ENCODE measurements at regions of chr12 and their contacts with region 1.

Region 1: DNA sequence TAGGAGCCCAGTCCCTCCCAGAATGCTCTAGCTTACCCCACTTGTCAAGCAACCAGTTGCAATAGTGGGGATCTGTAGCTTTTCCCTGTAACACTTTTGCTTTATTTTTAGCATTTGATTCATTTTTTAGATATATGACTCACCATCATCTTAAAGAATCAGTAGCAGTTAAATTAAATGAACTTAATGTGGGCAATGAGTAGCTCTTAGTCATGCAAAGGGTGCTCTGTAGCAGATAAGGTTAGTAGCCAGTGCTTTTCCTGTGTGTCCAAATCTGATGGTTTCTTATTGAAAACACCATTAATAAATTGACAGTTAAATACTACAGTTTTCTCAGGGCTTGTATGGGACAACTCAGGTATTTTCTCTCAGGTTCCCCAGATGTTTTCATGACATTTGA is 311.8 kb downstream of the RERGL start:
- DNase-seq: no peak
- H3K4me3 ChIP-seq: no peak overlapping the region
- H3K27ac ChIP-seq: no peak overlapping the region
- H3K4me1 ChIP-seq: no peaks in the 10 kb centered on the region
- H3K27me3 ChIP-seq: no peaks in the 10 kb centered on the region
- CTCF ChIP-seq: no peak
- EP300 ChIP-seq: no peak
- POLR2A ChIP-seq: no peak

Region 2: DNA sequence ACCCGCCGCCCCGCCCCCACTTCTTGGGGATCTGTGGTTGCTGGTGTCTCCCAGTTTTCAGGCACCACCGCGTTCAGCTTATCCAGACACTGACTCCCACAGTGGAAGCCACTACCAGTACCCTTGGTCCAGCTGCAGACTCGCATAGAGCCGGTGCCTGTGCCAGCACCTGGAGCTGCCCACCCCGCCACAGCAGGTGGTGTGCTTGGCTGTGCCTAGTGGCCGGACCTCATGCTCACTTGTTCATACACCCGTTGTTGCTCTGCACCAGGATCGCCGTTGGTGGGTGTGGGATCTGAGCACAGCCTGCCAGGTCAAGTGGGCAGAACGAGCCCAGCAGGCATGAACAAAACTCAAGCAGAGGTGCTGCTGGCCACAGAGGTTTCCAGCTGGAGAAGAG is 361.5 kb before region 1 on chr12:
- intact Hi-C with region 1: no loop called
- DNase-seq: no peak
- H3K4me3 ChIP-seq: no peak overlapping the region
- H3K27ac ChIP-seq: no peak overlapping the region
- H3K4me1 ChIP-seq: no peaks in the 10 kb centered on the region
- H3K27me3 ChIP-seq: no peaks in the 10 kb centered on the region
- CTCF ChIP-seq: no peak
- EP300 ChIP-seq: no peak
- POLR2A ChIP-seq: no peak

Region 3: DNA sequence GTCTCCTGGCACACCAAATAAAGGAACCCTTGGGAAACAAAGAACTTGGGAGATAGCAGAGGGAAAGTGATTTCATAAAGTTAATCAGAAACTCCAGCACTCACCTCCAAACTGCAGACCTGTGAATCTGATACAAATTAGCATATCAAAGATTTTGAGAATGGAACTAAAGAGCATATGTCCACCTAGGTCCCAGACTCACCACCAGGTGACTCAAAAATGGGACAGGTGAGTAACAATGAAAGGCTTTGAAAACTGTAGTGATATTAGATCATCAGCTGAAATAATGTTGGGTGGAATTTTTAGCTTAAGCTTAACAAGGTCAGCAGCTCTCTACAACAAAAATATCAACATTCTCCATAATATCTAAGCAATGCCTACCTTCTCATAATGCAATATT is 97.0 kb after region 1 on chr12:
- intact Hi-C with region 1: loop called (anchors 5 kb)
- DNase-seq: no peak
- H3K4me3 ChIP-seq: no peak overlapping the region
- H3K27ac ChIP-seq: no peak overlapping the region
- H3K4me1 ChIP-seq: no peaks in the 10 kb centered on the region
- H3K27me3 ChIP-seq: no peaks in the 10 kb centered on the region
- CTCF ChIP-seq: no peak
- EP300 ChIP-seq: no peak
- POLR2A ChIP-seq: no peak

Region 4: DNA sequence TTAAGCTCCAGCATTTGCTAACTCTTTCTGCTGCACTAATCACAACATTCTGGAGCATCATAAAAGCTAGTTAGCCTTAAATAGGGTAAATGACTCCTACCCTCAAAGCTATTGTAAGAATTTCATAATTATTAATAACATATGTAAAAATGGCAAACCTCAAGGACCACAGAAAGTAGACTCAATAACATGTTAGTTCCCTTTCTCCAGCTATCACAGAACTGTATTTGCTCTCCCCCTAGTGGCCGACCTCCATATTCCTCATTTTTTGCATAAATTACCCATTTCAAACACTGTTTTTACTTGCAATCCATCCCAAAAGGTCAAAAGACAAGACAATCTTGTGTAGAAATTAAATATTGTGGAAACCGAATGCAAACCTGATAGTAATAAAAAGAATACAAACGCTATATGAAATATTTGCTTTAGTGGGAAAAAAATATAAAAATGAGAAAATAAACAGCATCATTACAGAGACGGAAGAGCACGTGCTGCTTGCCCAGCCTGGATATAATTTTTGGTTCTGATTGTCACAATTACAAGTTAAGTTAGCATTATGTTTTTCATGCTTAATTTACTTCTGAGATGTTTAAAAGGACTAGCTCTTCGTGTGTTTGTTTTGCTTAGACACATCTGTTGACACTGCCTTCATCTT is 213.9 kb after region 1 on chr12:
- intact Hi-C with region 1: no loop called
- DNase-seq: peak in 1 of 2 donors; percentile 66
- H3K4me3 ChIP-seq: no peak overlapping the region
- H3K27ac ChIP-seq: no peak overlapping the region
- H3K4me1 ChIP-seq: no peaks in the 10 kb centered on the region
- H3K27me3 ChIP-seq: no peaks in the 10 kb centered on the region
- CTCF ChIP-seq: peak in 4 of 7 experiments; percentile 25 to 53 (median 38)
- EP300 ChIP-seq: no peak
- POLR2A ChIP-seq: no peak

Measured in stomach (tissue), 19 donors.